Activated CD8-positive, alpha-beta T cell treated with anti-CD3 and anti-CD28 coated beads for 36 hours (primary cell): ENCODE measurements at regions of chr10 and their contacts with region 1.

Region 1: GRCh38 chr10:22630234-22631174 is 83.9 kb downstream of the PIP4K2A start:
- DNase-seq: peak; percentile 64
- ATAC-seq: peak; percentile 76
- H3K4me3 Mint-ChIP-seq: peak overlapping the region; percentile 67
- H3K27ac Mint-ChIP-seq: peak overlapping the region; percentile 95
- H3K4me1 Mint-ChIP-seq: peaks cover 90% of the 10 kb centered on the region
- H3K27me3 Mint-ChIP-seq: no peaks in the 10 kb centered on the region
- CTCF ChIP-seq: no peak

Region 2: GRCh38 chr10:22599048-22599561 is 31.4 kb before region 1 on chr10:
- CTCF ChIA-PET with region 1: interaction called, 3 read pairs
- POLR2A ChIA-PET with region 1: interaction called, 11 read pairs
- intact Hi-C with region 1: no loop called
- DNase-seq: no peak
- ATAC-seq: peak; percentile 37
- H3K4me3 Mint-ChIP-seq: no peak overlapping the region
- H3K27ac Mint-ChIP-seq: peak overlapping the region; percentile 75
- H3K4me1 Mint-ChIP-seq: peaks cover 79% of the 10 kb centered on the region
- H3K27me3 Mint-ChIP-seq: no peaks in the 10 kb centered on the region
- CTCF ChIP-seq: no peak

Region 3: GRCh38 chr10:22615819-22616499 is 14.5 kb before region 1 on chr10:
- CTCF ChIA-PET with region 1: interaction called, 13 read pairs
- POLR2A ChIA-PET with region 1: interaction called, 18 read pairs
- intact Hi-C with region 1: no loop called
- DNase-seq: peak; percentile 62
- ATAC-seq: peak; percentile 43
- H3K4me3 Mint-ChIP-seq: peak overlapping the region; percentile 69
- H3K27ac Mint-ChIP-seq: peak overlapping the region; percentile 91
- H3K4me1 Mint-ChIP-seq: peaks cover 96% of the 10 kb centered on the region
- H3K27me3 Mint-ChIP-seq: no peaks in the 10 kb centered on the region
- CTCF ChIP-seq: no peak

Region 4: DNA sequence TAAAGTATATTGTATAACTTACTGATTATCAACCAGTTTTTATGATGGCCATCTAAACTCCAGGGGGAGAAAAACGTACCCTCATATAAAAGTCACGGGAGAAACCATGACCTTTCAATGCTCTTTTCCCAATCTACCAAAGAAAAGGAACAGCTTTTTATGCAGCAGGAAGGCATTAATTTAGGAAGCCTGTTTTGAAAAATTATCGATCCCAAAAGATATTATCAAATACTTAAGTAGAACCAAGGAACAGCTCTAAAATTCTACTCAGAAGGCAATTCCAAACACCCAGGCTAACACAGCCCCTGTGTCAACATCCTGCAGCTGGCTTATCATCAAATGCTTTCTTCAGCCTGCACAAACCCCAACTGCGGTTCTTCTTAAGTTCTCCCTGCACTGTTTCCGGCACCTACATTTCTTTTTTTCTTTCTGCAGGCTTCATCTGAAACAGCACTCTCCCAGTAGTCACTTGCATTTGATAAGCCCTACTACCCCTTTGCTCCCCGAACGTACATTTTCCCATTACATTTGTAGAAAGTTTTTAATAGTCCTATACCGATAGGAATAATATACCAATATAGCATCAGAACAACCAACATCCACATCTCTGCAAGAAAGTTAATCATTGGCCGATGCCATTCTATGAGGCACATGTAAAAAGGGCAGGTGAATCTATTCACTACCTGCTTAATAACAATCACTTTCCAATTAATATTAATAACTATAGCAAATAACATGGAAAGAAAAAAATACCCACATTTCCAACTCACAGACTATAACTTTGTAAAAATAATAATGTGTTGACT is 36.0 kb after region 1 on chr10:
- CTCF ChIA-PET with region 1: interaction called, 3 read pairs
- POLR2A ChIA-PET with region 1: interaction called, 4 read pairs
- intact Hi-C with region 1: loop called (anchors 5 kb)
- DNase-seq: peak; percentile 80
- ATAC-seq: peak; percentile 79
- H3K4me3 Mint-ChIP-seq: peak overlapping the region; percentile 81
- H3K27ac Mint-ChIP-seq: peak overlapping the region; percentile 93
- H3K4me1 Mint-ChIP-seq: peaks cover 89% of the 10 kb centered on the region
- H3K27me3 Mint-ChIP-seq: no peaks in the 10 kb centered on the region
- CTCF ChIP-seq: no peak

Region 5: GRCh38 chr10:22682237-22683139 is 52.0 kb after region 1 on chr10:
- CTCF ChIA-PET with region 1: interaction called, 4 read pairs
- POLR2A ChIA-PET with region 1: interaction called, 16 read pairs
- intact Hi-C with region 1: loop called (anchors 5 kb)
- DNase-seq: peak; percentile 85
- ATAC-seq: peak; percentile 42
- H3K4me3 Mint-ChIP-seq: peak overlapping the region; percentile 59
- H3K27ac Mint-ChIP-seq: peak overlapping the region; percentile 100
- H3K4me1 Mint-ChIP-seq: peaks cover 88% of the 10 kb centered on the region
- H3K27me3 Mint-ChIP-seq: no peaks in the 10 kb centered on the region
- CTCF ChIP-seq: no peak